GM10248 (cell line): ENCODE measurements at regions of chr2 and their contacts with region 1.

Region 1: GRCh38 chr2:38947240-38948239 is 57.9 kb downstream of the ARHGEF33 start:
- DNase-seq: peak; percentile 75
- CTCF ChIP-seq: peak; percentile 75

Region 2: DNA sequence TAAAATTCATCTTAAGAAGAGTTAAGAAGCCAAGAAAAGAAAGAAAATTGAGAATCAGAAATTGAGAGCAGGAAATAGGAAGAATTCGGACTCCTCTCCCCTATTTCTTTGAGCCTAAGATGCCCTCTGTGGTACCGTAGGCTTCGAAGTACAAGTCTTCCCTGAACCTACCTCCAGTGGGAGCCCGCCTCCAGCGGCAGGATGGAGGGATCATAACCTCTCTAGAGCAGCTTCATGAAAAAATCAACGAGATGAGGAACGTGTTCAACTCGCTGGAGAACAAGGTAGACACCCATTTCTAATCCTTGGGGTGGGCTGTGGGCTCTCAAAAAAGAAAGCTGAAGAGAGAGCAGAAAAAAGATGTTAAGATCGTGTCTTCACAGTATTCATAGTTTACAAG is 21.6 kb before region 1 on chr2:
- CTCF ChIA-PET with region 1: interaction called, 28 read pairs
- POLR2A ChIA-PET with region 1: no interaction called
- DNase-seq: no peak
- CTCF ChIP-seq: no peak

Region 3: GRCh38 chr2:38959938-38960608 is 12.5 kb after region 1 on chr2:
- CTCF ChIA-PET with region 1: interaction called, 16 read pairs
- POLR2A ChIA-PET with region 1: no interaction called
- DNase-seq: peak; percentile 85
- CTCF ChIP-seq: no peak

Region 4: GRCh38 chr2:38971377-38971776 is 23.8 kb after region 1 on chr2:
- CTCF ChIA-PET with region 1: interaction called, 13 read pairs
- POLR2A ChIA-PET with region 1: no interaction called
- DNase-seq: no peak
- CTCF ChIP-seq: no peak